Ovary (tissue), 10 donors: ENCODE measurements at regions of chr16 and their contacts with region 1.

Region 1: DNA sequence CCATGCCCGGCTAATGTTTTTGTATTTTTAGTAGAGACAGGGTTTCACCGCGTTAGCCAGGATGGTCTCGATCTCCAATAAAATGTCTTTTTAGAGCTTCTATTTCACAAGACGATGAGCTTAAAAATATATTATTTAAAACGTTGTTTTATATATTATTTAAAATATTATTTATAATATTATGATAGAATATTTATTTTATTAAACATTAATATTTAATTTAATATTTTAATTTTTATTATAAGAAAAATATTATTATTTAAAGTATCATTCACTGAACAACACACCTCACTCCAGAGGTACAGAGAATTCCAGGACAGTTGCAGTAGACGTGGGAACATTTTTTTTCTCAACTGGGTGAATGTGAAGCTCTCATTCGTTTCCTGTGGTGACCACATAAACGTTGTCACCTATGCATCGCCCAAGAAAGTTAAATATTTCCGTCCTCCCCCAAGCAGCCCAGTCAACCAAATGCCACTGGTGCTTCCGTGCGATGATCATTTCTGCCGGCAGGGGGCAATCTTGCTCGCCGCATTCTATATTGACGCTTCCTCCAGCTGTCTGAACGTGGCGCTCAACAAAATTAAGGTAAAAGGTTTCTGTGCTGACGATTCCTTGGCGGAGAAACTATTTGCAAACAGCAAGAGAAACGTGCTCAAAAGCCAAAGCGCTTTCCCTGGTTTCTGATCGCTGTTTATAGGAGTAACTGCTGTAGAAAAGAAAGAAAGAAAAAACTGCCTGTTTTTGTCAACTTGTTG is 41.7 kb upstream of the PRSS54 start:
- DNase-seq: peak; percentile 55 to 85 (median 78)
- H3K4me3 ChIP-seq: peak overlapping the region; percentile 6
- H3K27ac ChIP-seq: no peak overlapping the region
- H3K4me1 ChIP-seq: no peaks in the 10 kb centered on the region
- H3K27me3 ChIP-seq: no peaks in the 10 kb centered on the region
- CTCF ChIP-seq: peak; percentile 51 to 67 (median 65)
- EP300 ChIP-seq: no peak
- POLR2A ChIP-seq: no peak

Region 2: DNA sequence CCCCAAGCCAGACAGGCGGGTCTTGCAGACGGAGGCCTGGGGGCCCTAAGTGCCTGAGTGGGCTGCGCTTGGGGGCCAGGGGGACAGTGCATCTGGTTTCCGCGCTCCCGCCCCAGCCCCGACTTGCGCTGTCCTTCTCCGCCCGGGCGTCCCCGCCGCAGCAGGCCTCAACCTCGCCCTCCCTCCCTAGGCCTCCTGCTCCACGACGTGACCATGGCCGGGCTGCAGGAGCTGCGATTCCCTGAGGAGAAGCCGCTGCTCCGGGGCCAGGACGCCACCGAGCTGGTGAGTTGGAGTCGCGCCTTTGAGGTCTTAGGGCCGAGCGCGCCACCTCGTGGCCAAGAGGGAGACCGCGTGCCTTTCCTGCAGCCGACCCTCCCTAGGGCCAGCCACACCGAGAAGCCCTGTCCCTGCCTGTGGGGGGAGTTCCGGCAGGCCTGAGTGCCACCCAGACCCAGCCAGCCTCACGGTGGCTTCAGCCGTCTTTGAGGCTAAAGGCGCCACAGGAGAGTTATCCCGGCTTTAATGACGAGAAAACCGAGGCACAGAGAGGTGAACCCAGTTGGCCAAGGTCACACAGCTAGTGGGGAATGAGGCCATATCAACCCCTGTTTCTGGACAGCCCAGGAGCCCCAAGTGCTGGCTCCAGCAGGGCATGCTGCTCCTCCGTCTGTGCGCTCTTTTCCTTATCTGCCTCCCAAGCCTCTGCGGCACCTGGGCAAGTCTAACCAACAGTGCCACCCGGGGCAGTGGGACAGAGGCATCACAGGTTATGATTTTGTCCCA is 151.2 kb after region 1 on chr16:
- intact Hi-C with region 1: loop called (anchors 5 to 10 kb)
- DNase-seq: peak; percentile 47 to 81 (median 69)
- H3K4me3 ChIP-seq: peak overlapping the region; percentile 22
- H3K27ac ChIP-seq: no peak overlapping the region
- H3K4me1 ChIP-seq: peaks cover 2% of the 10 kb centered on the region
- H3K27me3 ChIP-seq: no peaks in the 10 kb centered on the region
- CTCF ChIP-seq: peak; percentile 72 to 79 (median 77)
- EP300 ChIP-seq: no peak
- POLR2A ChIP-seq: no peak

Region 3: GRCh38 chr16:58494981-58495520 is 158.5 kb after region 1 on chr16:
- intact Hi-C with region 1: loop called in 2 of 4 experiments (anchors 10 kb)
- DNase-seq: peak; percentile 42 to 80 (median 59)
- H3K4me3 ChIP-seq: no peak overlapping the region
- H3K27ac ChIP-seq: no peak overlapping the region
- H3K4me1 ChIP-seq: peaks cover 2% of the 10 kb centered on the region
- H3K27me3 ChIP-seq: no peaks in the 10 kb centered on the region
- CTCF ChIP-seq: no peak
- EP300 ChIP-seq: no peak
- POLR2A ChIP-seq: no peak

Region 4: GRCh38 chr16:58652461-58653140 is 316.1 kb after region 1 on chr16:
- intact Hi-C with region 1: loop called in 1 of 4 experiments (anchors 10 kb)
- DNase-seq: no peak
- H3K4me3 ChIP-seq: no peak overlapping the region
- H3K27ac ChIP-seq: no peak overlapping the region
- H3K4me1 ChIP-seq: no peaks in the 10 kb centered on the region
- H3K27me3 ChIP-seq: no peaks in the 10 kb centered on the region
- CTCF ChIP-seq: no peak
- EP300 ChIP-seq: no peak
- POLR2A ChIP-seq: no peak

Region 5: DNA sequence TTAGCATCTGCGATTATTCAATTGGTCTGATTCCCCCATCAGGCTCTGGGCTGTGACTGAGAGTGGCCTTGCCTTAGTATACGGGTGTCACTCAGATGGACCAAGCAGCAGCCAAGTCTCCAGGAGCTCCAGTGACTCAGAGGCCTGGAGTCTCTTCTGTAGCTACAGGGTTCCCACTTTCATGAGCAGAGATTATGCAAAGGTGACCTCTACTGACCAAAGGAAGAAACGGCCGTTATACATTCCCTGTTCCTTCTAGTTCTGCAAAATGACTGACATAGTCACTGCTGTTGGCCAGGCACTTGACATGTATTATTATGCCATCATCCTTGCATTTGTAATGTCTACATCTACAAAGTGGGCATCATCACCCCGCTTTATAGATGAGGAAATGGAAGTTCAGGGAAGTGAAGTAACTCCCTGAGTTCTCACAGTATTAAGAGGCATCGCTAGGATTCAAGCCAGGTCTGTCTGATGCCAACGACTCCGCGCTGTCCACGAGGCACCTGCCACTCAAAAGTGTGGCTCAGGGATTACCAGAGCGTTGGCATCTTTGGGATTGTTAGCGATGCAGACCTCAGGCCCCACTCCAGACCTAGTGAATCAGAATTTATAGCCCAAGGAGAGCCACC is 324.8 kb after region 1 on chr16:
- intact Hi-C with region 1: loop called in 2 of 4 experiments (anchors 10 kb)
- DNase-seq: no peak
- H3K4me3 ChIP-seq: no peak overlapping the region
- H3K27ac ChIP-seq: no peak overlapping the region
- H3K4me1 ChIP-seq: no peaks in the 10 kb centered on the region
- H3K27me3 ChIP-seq: no peaks in the 10 kb centered on the region
- CTCF ChIP-seq: peak in 1 of 3 donors; percentile 7
- EP300 ChIP-seq: no peak
- POLR2A ChIP-seq: no peak

Region 6: GRCh38 chr16:58755989-58756649 is 419.6 kb after region 1 on chr16:
- intact Hi-C with region 1: loop called in 1 of 4 experiments (anchors 10 kb)
- DNase-seq: peak; percentile 36 to 69 (median 50)
- H3K4me3 ChIP-seq: no peak overlapping the region
- H3K27ac ChIP-seq: no peak overlapping the region
- H3K4me1 ChIP-seq: no peaks in the 10 kb centered on the region
- H3K27me3 ChIP-seq: no peaks in the 10 kb centered on the region
- CTCF ChIP-seq: peak in 1 of 3 donors; percentile 21
- EP300 ChIP-seq: no peak
- POLR2A ChIP-seq: no peak